Activated B cell treated with CpG ODN at 0.5 μM for 24 hours (primary cell): ENCODE measurements at regions of chr2 and their contacts with region 1.

Region 1: GRCh38 chr2:17166506-17166905 is 351.7 kb downstream of the RAD51AP2 start:
- DNase-seq: no peak
- ATAC-seq: peak; percentile 54
- H3K4me3 Mint-ChIP-seq: peak overlapping the region; percentile 3
- H3K27ac Mint-ChIP-seq: no peak overlapping the region
- H3K4me1 Mint-ChIP-seq: peaks cover 29% of the 10 kb centered on the region
- H3K27me3 Mint-ChIP-seq: no peaks in the 10 kb centered on the region
- CTCF ChIP-seq: no peak

Region 2: DNA sequence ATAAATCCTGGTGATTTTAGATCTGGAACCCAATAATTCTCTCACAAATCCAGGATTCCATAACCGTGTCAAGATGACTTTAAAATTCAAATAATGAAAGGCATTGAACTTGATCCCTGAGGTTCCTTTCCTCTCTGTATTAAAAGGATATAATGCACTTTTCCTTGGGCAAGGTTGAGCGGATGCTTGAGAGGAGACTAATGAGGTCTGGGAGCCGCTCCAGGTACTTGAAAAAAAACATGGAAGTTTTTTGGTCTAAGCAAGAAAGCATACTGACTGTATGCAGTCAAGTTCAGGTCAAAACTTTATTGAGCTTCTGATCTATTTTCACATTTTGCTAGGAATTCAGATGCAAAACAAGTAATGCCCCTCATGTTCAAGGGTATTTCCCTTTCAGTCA is 33.2 kb after region 1 on chr2:
- CTCF ChIA-PET with region 1: no interaction called
- POLR2A ChIA-PET with region 1: no interaction called
- intact Hi-C with region 1: loop called (anchors 5 kb)
- DNase-seq: no peak
- ATAC-seq: no peak
- H3K4me3 Mint-ChIP-seq: no peak overlapping the region
- H3K27ac Mint-ChIP-seq: no peak overlapping the region
- H3K4me1 Mint-ChIP-seq: peaks cover 40% of the 10 kb centered on the region
- H3K27me3 Mint-ChIP-seq: no peaks in the 10 kb centered on the region
- CTCF ChIP-seq: no peak

Region 3: DNA sequence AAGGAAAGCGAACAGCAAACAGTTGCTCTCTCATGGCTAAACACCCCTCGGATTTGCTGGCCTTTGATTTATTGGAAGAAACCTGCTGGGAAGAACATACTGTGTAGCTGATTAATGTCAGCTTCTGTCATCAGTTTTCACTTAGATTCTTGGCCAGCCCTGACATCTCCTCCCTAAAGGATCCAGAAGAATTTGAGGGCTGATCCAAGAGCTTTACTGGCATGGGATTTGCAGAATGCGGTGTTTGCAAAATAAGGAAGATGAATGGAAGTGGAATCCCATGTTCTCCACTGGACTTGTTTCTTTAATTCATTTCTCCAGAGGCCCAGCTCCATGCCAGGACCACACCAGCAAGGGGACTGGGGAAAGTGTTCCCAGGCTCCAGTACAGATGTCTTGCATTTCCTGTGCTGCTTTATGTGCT is 1313.5 kb after region 1 on chr2:
- CTCF ChIA-PET with region 1: no interaction called
- POLR2A ChIA-PET with region 1: no interaction called
- intact Hi-C with region 1: no loop called
- DNase-seq: no peak
- ATAC-seq: no peak
- H3K4me3 Mint-ChIP-seq: no peak overlapping the region
- H3K27ac Mint-ChIP-seq: no peak overlapping the region
- H3K4me1 Mint-ChIP-seq: no peaks in the 10 kb centered on the region
- H3K27me3 Mint-ChIP-seq: peaks cover 3% of the 10 kb centered on the region
- CTCF ChIP-seq: no peak